ENCODE measurements at regions of chr20 and their contacts with region 1.

Region 1: DNA sequence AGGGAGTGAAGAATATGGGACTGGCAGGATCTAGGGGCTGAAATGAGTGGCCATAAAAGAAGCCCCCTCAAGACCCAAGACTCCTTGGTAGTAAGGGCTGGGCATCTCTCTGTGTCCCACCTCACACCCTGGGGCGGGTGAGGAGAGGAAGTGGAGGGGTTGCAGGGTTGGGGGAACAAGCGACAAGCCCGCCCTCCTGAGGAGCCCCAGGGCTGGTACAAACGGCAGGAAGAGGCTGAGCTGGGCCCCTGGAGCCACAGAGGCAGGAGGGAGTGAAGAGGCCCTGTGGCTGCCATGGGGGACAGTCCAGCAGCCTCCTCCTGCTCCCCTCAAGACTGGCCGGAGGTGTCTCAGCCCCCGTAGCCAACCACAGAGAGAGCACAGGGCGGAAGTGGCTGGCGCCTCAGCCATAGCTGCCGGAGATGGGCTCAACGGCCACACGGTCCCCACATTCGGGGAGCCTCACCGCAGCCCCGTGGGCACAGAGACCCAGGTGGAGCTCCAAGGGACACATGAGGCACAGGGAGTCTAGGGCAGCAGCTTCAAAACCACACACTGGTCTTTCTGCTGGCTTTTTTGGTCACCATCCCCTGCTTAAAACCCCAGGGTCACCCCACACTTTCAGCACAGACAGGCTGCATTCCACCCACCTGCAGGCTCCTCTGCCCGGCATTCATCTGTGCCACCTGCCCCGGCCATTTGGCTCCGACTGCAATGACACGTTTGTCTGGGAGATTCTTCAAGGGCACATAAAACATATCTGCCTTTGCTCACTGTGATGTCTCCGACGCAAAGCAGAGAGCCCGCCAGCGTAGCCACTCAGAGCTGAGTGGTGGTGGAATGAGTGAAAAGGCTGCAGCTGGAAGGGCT is 524 bp downstream of the C20orf203 start:
- DNase-seq: no peak
- H3K4me3 ChIP-seq: no peak overlapping the region
- H3K27ac ChIP-seq: no peak overlapping the region
- H3K4me1 ChIP-seq: no peaks in the 10 kb centered on the region
- H3K27me3 ChIP-seq: no peaks in the 10 kb centered on the region
- CTCF ChIP-seq: no peak
- POLR2A ChIP-seq: no peak

Region 2: GRCh38 chr20:32779500-32780211 is 106.4 kb after region 1 on chr20:
- intact Hi-C with region 1: loop called (anchors 2 kb)
- DNase-seq: no peak
- H3K4me3 ChIP-seq: no peak overlapping the region
- H3K27ac ChIP-seq: no peak overlapping the region
- H3K4me1 ChIP-seq: no peaks in the 10 kb centered on the region
- H3K27me3 ChIP-seq: no peaks in the 10 kb centered on the region
- CTCF ChIP-seq: no peak
- POLR2A ChIP-seq: no peak

Measured in thyroid gland (tissue), 4 donors.